Caco-2 (cell line): ENCODE measurements at regions of chr13 and their contacts with region 1.

Region 1: DNA sequence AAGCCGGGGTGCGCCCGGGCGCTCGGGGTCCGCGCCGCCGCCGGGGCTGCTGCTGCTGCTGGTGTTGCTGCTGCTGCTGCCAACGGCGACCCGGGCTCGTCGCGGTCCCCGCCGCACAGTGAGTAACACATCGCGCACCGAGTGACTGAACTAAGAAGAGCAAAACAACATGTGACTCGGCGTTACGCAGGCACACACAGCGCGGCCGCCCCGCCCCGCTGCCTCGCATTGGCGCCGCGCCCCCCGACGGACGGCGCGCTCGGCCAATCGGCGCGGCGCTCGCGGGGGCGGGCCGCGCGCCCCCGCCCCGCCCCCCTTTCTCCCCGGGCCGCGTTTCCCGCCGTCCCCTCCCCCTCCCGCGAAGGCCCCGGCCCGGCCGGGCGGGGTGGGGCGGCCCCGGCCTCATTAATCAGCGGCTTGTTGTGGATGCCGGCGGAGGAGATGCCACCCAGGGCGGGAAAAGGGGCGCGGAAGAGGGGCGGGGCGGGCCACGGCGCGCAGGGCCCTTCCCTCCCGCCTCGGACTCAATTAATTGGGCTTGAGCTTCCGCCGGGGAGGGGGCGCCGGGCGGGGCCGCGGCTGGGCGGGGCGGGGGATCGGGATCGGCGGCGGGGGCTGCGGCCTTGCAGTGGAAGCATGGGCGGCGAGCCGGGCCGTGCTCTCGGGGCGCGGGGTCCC is at the start of gene IRS2:
- DNase-seq: peak; percentile 91
- H3K4me3 ChIP-seq: peak within 1 kb of the TSS; percentile 61
- H3K4me3 Mint-ChIP-seq: peak within 1 kb of the TSS; percentile 71
- H3K27ac Mint-ChIP-seq: no peak within 1 kb of the TSS
- H3K4me1 ChIP-seq: peaks cover 4% of the 10 kb centered on the region; the same call in 1 of the 2 replicates
- H3K4me1 Mint-ChIP-seq: no peaks in the 10 kb centered on the region
- H3K27me3 ChIP-seq: no peaks in the 10 kb centered on the region
- H3K27me3 Mint-ChIP-seq: peaks cover 20% of the 10 kb centered on the region
- CTCF ChIP-seq: no peak
- total RNA-seq, gene IRS2: 5.4 and 5.5 TPM in 2 replicates

Region 2: DNA sequence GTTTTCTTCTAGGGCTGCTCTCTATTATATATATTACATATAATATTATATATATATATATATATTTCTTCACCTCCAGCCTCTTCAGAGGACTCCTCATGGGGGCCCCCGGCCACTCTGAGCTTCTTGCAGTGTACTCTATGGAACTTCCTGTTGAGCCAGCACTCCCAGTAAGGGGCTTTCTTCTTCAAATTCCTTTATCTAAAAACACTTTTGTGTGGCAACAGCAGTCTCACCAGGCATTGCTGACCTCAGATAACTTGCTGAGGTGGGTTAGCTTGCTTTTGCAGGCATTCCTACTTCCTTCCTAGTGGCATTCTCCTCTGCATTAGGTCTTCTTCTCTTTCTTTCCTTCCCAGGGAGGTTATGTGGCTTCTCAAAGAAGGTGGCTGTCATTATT is 775.7 kb before region 1 on chr13:
- CTCF ChIA-PET with region 1: no interaction called
- POLR2A ChIA-PET with region 1: no interaction called
- intact Hi-C with region 1: loop called (anchors 5 kb)
- DNase-seq: no peak
- H3K4me3 ChIP-seq: no peak overlapping the region
- H3K4me3 Mint-ChIP-seq: no peak overlapping the region
- H3K27ac Mint-ChIP-seq: no peak overlapping the region
- H3K4me1 ChIP-seq: no peaks in the 10 kb centered on the region
- H3K4me1 Mint-ChIP-seq: no peaks in the 10 kb centered on the region
- H3K27me3 ChIP-seq: no peaks in the 10 kb centered on the region; the same call in 1 of the 2 replicates
- H3K27me3 Mint-ChIP-seq: peaks cover 10% of the 10 kb centered on the region
- CTCF ChIP-seq: no peak

Region 3: GRCh38 chr13:109275852-109276251 is 510.7 kb before region 1 on chr13:
- CTCF ChIA-PET with region 1: no interaction called
- POLR2A ChIA-PET with region 1: no interaction called
- intact Hi-C with region 1: loop called (anchors 10 kb)
- DNase-seq: peak; percentile 63 to 70
- H3K4me3 ChIP-seq: no peak overlapping the region
- H3K4me3 Mint-ChIP-seq: peak overlapping the region; percentile 29
- H3K27ac Mint-ChIP-seq: peak overlapping the region; percentile 44
- H3K4me1 ChIP-seq: peaks cover 57% of the 10 kb centered on the region
- H3K4me1 Mint-ChIP-seq: peaks cover 40% of the 10 kb centered on the region
- H3K27me3 ChIP-seq: no peaks in the 10 kb centered on the region
- H3K27me3 Mint-ChIP-seq: no peaks in the 10 kb centered on the region
- CTCF ChIP-seq: peak in 1 of 2 experiments; percentile 45

Region 4: DNA sequence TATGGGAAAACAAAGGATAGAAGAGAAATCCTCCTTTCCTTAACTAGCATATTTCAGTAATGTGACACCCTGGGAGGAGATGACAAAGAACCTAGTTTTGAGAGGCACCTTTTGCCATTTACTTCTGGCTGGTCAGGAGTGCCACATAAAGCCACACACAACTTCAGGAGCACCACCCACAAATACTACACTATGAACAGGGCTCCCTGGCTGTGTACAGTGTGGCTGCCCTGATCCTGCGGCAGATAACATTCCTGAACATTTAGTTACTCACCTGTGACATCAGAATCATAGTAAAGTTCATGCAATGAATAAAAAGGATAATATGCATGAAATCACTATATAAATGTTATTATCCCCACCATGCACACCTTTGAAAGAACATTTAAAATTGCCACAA is 17.2 kb after region 1 on chr13:
- CTCF ChIA-PET with region 1: no interaction called
- POLR2A ChIA-PET with region 1: no interaction called
- intact Hi-C with region 1: loop called (anchors 1 kb)
- DNase-seq: no peak
- H3K4me3 ChIP-seq: no peak overlapping the region
- H3K4me3 Mint-ChIP-seq: no peak overlapping the region
- H3K27ac Mint-ChIP-seq: no peak overlapping the region
- H3K4me1 ChIP-seq: peaks cover 14% of the 10 kb centered on the region
- H3K4me1 Mint-ChIP-seq: peaks cover 14% of the 10 kb centered on the region
- H3K27me3 ChIP-seq: no peaks in the 10 kb centered on the region
- H3K27me3 Mint-ChIP-seq: peaks cover 4% of the 10 kb centered on the region
- CTCF ChIP-seq: no peak

Region 5: DNA sequence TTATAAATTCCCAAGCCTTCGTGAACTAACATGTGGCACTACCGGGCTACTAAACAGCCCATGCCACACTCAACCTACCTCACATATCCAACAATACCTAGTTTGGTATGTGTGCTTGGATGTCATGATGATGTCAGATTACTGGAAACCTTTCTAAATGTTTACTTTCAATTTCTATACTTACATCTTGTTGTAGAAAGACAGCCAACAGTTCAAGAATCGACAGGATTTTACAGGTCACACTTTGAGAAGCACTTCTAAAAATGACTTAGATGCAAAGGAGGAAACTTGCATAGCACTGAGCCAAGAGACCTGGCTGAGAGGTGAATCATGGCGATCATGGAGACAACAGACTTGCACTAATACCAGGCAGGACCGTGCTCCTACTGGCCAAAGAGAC is 310.4 kb after region 1 on chr13:
- CTCF ChIA-PET with region 1: no interaction called
- POLR2A ChIA-PET with region 1: no interaction called
- intact Hi-C with region 1: no loop called
- DNase-seq: no peak
- H3K4me3 ChIP-seq: no peak overlapping the region
- H3K4me3 Mint-ChIP-seq: no peak overlapping the region
- H3K27ac Mint-ChIP-seq: no peak overlapping the region
- H3K4me1 ChIP-seq: peaks cover 7% of the 10 kb centered on the region; the same call in 1 of the 2 replicates
- H3K4me1 Mint-ChIP-seq: no peaks in the 10 kb centered on the region
- H3K27me3 ChIP-seq: no peaks in the 10 kb centered on the region
- H3K27me3 Mint-ChIP-seq: no peaks in the 10 kb centered on the region
- CTCF ChIP-seq: no peak